ENCODE measurements at regions of chr12 and their contacts with region 1.

Region 1: DNA sequence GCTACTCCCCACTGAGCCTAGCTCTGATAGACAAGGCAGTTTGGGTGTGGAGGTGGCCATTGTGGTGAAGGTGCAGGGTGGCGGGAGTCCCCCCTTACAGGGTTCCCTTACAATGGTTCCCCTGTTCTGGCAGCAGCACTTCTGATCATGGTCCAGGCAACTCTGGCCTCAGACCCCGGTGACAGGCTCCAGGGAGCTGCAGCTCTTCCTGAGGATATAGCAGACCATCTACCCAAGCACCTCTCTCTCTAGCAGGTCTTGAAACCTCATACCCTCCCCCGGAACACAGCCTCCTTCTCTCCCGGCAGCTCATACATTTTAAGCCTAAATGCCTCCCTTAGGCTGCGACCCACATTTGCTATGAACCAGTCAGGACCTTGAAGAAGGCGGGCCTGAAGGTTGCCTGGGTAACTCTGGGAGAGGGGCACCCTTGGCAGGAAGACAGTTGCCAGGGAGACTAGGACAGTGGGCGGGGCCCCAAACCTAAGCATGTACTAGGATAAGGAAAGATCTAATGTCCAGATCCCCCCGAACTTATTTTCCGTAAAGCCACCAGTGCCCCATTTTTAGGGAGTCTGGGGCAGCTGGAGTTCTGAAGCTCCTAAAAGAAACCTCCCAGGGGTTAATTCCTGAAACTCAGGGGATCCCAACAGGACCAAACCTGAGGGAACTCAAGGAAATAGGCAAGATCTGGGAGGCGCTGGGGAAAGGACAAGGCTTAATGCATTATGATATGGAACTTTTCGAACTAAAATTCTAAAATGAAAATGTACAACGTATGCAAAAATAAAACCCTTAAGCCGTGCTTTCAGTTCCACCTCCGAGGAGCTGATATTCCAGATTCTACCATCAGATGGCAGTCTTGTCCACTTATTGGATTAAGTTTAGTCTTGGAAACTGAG is 4.5 kb upstream of the GDF11 start:
- DNase-seq: peak; percentile 82
- ATAC-seq: peak; percentile 79
- H3K4me3 ChIP-seq: peak overlapping the region; percentile 63 to 64
- H3K27ac ChIP-seq: peak overlapping the region; percentile 46
- H3K4me1 ChIP-seq: peaks cover 14 to 44% of the 10 kb centered on the region in 2 experiments
- H3K27me3 ChIP-seq: no peaks in the 10 kb centered on the region
- CTCF ChIP-seq: peak; percentile 65 to 93 (median 87)
- POLR2A ChIP-seq: peak; percentile 37
- RAD21 ChIP-seq: peak; percentile 95

Region 2: GRCh38 chr12:55060470-55060869 is 677.9 kb before region 1 on chr12:
- CTCF ChIA-PET with region 1: no interaction called
- POLR2A ChIA-PET with region 1: no interaction called
- RAD21 ChIA-PET with region 1: no interaction called
- intact Hi-C with region 1: no loop called
- DNase-seq: no peak
- ATAC-seq: peak; percentile 44; the same call in 1 of the 2 replicates
- H3K4me3 ChIP-seq: no peak overlapping the region
- H3K27ac ChIP-seq: no peak overlapping the region
- H3K4me1 ChIP-seq: no peaks in the 10 kb centered on the region
- H3K27me3 ChIP-seq: peaks cover 87% of the 10 kb centered on the region
- CTCF ChIP-seq: no peak
- POLR2A ChIP-seq: no peak
- RAD21 ChIP-seq: no peak

Region 3: GRCh38 chr12:55314043-55314442 is 424.3 kb before region 1 on chr12 and contains the start of gene OR6C1:
- CTCF ChIA-PET with region 1: no interaction called
- POLR2A ChIA-PET with region 1: no interaction called
- RAD21 ChIA-PET with region 1: no interaction called
- intact Hi-C with region 1: no loop called
- DNase-seq: no peak
- ATAC-seq: no peak
- H3K4me3 ChIP-seq: no peak within 1 kb of the TSS
- H3K27ac ChIP-seq: no peak within 1 kb of the TSS
- H3K4me1 ChIP-seq: no peaks in the 10 kb centered on the region
- H3K27me3 ChIP-seq: peaks cover 6% of the 10 kb centered on the region; the same call in 1 of the 2 replicates
- CTCF ChIP-seq: no peak
- POLR2A ChIP-seq: no peak
- RAD21 ChIP-seq: no peak
- total RNA-seq, gene OR6C1: not detected

Region 4: GRCh38 chr12:55715833-55716581 is 22.4 kb before region 1 on chr12 and contains the start of gene BLOC1S1:
- CTCF ChIA-PET with region 1: interaction called, 35 read pairs
- POLR2A ChIA-PET with region 1: interaction called, 5 read pairs
- RAD21 ChIA-PET with region 1: interaction called in 1 of 2 experiments, 3 read pairs
- intact Hi-C with region 1: no loop called
- DNase-seq: peak; percentile 94
- ATAC-seq: peak; percentile 90
- H3K4me3 ChIP-seq: peak within 1 kb of the TSS; percentile 75 to 94
- H3K27ac ChIP-seq: peak within 1 kb of the TSS; percentile 84
- H3K4me1 ChIP-seq: peaks cover 27 to 48% of the 10 kb centered on the region in 2 experiments
- H3K27me3 ChIP-seq: peaks cover 11% of the 10 kb centered on the region; the same call in 1 of the 2 replicates
- CTCF ChIP-seq: no peak
- POLR2A ChIP-seq: peak; percentile 49
- RAD21 ChIP-seq: no peak
- total RNA-seq, gene BLOC1S1: 85.5 TPM

Region 5: GRCh38 chr12:55817346-55818139 is 79.2 kb after region 1 on chr12 and contains the starts of genes ORMDL2 and SARNP:
- CTCF ChIA-PET with region 1: interaction called, 18 read pairs
- POLR2A ChIA-PET with region 1: interaction called, 6 read pairs
- RAD21 ChIA-PET with region 1: no interaction called
- intact Hi-C with region 1: no loop called
- DNase-seq: peak; percentile 100
- ATAC-seq: peak; percentile 95
- H3K4me3 ChIP-seq: peak within 1 kb of the TSS; percentile 76 to 91
- H3K27ac ChIP-seq: peak within 1 kb of the TSS; percentile 62
- H3K4me1 ChIP-seq: peaks cover 14 to 20% of the 10 kb centered on the region in 2 experiments
- H3K27me3 ChIP-seq: no peaks in the 10 kb centered on the region
- CTCF ChIP-seq: no peak
- POLR2A ChIP-seq: peak; percentile 63
- RAD21 ChIP-seq: no peak
- total RNA-seq, gene ORMDL2: 25.5 TPM
- total RNA-seq, gene SARNP: 82.4 TPM

Region 6: GRCh38 chr12:55940065-55940732 is 201.8 kb after region 1 on chr12:
- CTCF ChIA-PET with region 1: interaction called, 18 read pairs
- POLR2A ChIA-PET with region 1: no interaction called
- RAD21 ChIA-PET with region 1: interaction called in 1 of 2 experiments, 7 read pairs
- intact Hi-C with region 1: no loop called
- DNase-seq: peak; percentile 59
- ATAC-seq: peak; percentile 100
- H3K4me3 ChIP-seq: no peak overlapping the region
- H3K27ac ChIP-seq: peak overlapping the region; percentile 26; the same call in 1 of the 2 replicates
- H3K4me1 ChIP-seq: peaks cover 4 to 25% of the 10 kb centered on the region in 2 experiments
- H3K27me3 ChIP-seq: no peaks in the 10 kb centered on the region
- CTCF ChIP-seq: peak; percentile 75 to 93 (median 91); a peak in 5 of 6 replicates
- POLR2A ChIP-seq: no peak
- RAD21 ChIP-seq: peak; percentile 91

Region 7: DNA sequence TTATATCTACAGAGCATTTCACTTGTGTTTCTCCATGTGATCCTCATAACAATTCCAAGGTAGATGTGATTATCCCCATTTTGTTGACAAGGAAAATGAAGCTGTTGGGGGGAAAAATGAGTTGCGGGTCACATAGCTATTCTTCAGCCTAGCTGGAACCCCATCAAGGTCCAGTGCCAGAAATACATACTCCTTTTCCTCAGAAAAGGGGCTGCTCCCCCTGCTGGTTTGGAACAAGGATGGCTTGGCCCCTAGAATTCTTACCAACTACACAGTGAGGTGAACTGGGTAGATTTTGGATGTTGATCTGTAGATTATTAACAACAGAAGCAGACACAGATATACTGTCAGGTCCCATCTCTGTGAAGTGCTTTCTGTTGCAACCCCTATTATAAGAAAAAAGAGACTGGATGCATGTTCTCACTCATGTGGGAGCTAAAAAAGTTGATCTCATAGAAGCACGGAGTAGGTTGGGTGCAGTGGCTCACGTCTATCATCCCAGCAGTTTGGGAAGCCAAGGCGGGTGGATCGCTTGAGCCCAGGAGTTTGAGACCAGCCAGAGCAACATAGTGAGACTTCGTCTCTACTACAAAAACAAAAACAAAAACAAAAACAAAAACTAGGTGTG is 291.4 kb after region 1 on chr12:
- CTCF ChIA-PET with region 1: interaction called, 21 read pairs
- POLR2A ChIA-PET with region 1: no interaction called
- RAD21 ChIA-PET with region 1: no interaction called
- intact Hi-C with region 1: loop called (anchors 5 kb)
- DNase-seq: no peak
- ATAC-seq: peak; percentile 88
- H3K4me3 ChIP-seq: no peak overlapping the region
- H3K27ac ChIP-seq: no peak overlapping the region
- H3K4me1 ChIP-seq: no peaks in the 10 kb centered on the region
- H3K27me3 ChIP-seq: no peaks in the 10 kb centered on the region
- CTCF ChIP-seq: peak; percentile 73 to 78 (median 78)
- POLR2A ChIP-seq: no peak
- RAD21 ChIP-seq: peak; percentile 73

Region 8: GRCh38 chr12:56189176-56189917 is 451.0 kb after region 1 on chr12 and contains the start of gene SMARCC2:
- CTCF ChIA-PET with region 1: interaction called, 18 read pairs
- POLR2A ChIA-PET with region 1: interaction called, 4 read pairs
- RAD21 ChIA-PET with region 1: no interaction called
- intact Hi-C with region 1: no loop called
- DNase-seq: peak; percentile 75
- ATAC-seq: peak; percentile 85
- H3K4me3 ChIP-seq: peak within 1 kb of the TSS; percentile 86 to 88
- H3K27ac ChIP-seq: peak within 1 kb of the TSS; percentile 84
- H3K4me1 ChIP-seq: peaks cover 17 to 27% of the 10 kb centered on the region in 2 experiments
- H3K27me3 ChIP-seq: no peaks in the 10 kb centered on the region
- CTCF ChIP-seq: peak; percentile 65 to 70 (median 65)
- POLR2A ChIP-seq: no peak
- RAD21 ChIP-seq: peak; percentile 54; the same call in 1 of the 2 replicates
- total RNA-seq, gene SMARCC2: 99.7 TPM

Region 9: GRCh38 chr12:56425193-56425592 is 686.8 kb after region 1 on chr12:
- CTCF ChIA-PET with region 1: no interaction called
- POLR2A ChIA-PET with region 1: no interaction called
- RAD21 ChIA-PET with region 1: no interaction called
- intact Hi-C with region 1: no loop called
- DNase-seq: no peak
- ATAC-seq: no peak
- H3K4me3 ChIP-seq: no peak overlapping the region
- H3K27ac ChIP-seq: no peak overlapping the region
- H3K4me1 ChIP-seq: no peaks in the 10 kb centered on the region
- H3K27me3 ChIP-seq: no peaks in the 10 kb centered on the region
- CTCF ChIP-seq: no peak
- POLR2A ChIP-seq: no peak
- RAD21 ChIP-seq: no peak

Measured in HCT116 (cell line).